Activated naive CD4-positive, alpha-beta T cell treated with anti-CD3 and anti-CD28 coated beads for 36 hours (primary cell): ENCODE measurements at regions of chr12 and their contacts with region 1.

Region 1: DNA sequence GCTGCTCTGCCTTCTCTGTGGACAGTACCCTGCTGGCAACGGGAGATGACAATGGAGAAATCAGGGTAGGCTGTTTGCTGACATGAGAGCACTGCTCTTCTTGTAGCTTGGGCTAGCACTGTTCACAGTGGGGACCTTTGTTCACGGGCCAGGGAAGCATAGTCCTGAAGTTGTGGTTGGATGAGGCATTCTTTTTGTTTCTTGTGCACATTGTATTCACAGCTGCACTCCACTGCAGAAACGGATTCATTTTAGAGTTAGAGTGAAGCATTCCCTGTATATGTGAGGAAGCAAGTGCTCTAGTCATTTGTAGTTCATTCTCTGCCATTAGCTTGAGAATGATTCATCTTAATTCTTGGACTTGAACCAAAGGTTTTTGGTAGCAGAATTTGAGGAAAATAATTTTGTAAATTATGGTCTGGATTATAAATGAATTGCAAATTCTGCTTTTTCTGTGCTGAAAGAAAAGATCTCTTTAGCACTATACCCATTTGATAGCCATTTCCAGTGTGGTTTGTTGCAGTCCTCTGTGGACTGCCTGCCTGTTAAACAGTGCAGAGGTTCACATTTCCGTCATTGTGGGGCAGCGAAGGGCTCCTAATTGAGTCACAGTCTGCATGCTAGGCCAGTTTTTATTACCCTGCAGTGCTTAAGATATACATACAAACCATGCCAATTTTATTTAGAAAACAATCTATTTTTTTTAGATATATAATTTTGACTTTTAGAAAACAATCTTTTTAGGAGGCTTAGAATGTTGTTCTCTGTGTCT is 80.6 kb downstream of the APAF1 start:
- DNase-seq: peak; percentile 77
- H3K4me3 Mint-ChIP-seq: no peak overlapping the region
- H3K27ac Mint-ChIP-seq: no peak overlapping the region
- H3K4me1 Mint-ChIP-seq: no peaks in the 10 kb centered on the region
- H3K27me3 Mint-ChIP-seq: no peaks in the 10 kb centered on the region

Region 2: DNA sequence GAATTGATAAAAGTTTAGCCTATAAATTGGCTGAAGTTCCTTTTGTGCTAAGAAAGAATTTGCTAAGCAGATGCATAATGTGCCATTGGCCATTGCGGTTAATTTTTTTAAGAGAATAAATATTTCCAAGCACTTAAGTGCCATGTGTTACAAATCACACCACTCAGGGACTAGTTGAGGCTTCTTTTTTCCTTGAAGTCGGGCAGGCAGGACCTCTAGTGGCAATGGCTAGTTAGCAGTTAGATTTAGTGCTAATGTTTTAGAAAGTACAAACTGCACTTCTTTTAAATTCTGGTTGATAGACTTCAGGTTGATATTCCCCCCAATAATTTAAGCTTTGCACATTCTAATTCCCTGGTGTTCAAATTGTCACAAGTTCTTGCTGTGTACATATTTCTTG is 213.7 kb after region 1 on chr12:
- CTCF ChIA-PET with region 1: interaction called, 3 read pairs
- intact Hi-C with region 1: loop called (anchors 2 kb)
- DNase-seq: peak; percentile 8
- H3K4me3 Mint-ChIP-seq: no peak overlapping the region
- H3K27ac Mint-ChIP-seq: no peak overlapping the region
- H3K4me1 Mint-ChIP-seq: no peaks in the 10 kb centered on the region
- H3K27me3 Mint-ChIP-seq: peaks cover 23% of the 10 kb centered on the region